Caco-2 (cell line): ENCODE measurements at regions of chr19 and their contacts with region 1.

Region 1: DNA sequence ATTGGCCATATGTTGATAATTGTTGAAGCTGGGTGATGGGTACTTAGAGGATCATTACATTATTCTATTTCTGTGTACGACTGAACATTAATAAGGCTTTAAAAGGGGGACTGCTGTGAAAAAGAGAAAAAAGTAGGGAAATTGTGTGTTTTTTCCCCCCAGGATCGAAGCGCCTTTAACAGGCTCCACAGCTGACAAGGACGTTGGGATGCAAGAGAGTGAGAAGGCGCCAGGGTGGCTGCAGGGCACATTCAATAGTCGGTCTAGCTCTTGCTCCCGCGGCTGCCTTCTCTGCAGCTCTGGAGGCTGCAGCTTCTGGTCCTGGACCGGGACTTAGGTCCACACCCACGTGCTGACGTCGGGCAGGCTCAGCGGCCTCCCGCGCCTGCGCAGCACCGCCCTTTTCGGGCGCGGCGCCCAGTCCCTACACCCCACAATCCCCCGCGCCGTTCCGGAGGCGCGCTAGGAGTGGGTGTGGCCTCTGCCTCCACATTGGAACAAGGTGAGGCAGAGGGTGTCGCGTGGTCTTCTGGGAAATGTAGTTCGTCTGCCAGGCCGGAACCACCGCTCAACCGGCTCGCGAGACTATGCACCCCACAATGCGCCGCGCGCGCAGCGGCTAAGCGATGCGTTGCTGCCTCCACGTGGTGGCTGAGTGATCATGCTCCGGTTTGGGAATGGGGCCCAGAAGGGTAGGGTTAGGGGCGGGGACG is 4.9 kb upstream of the LRFN3 start:
- DNase-seq: peak; percentile 100
- H3K4me3 ChIP-seq: peak overlapping the region; percentile 29
- H3K4me3 Mint-ChIP-seq: peak overlapping the region; percentile 67
- H3K27ac Mint-ChIP-seq: peak overlapping the region; percentile 3
- H3K4me1 ChIP-seq: peaks cover 8% of the 10 kb centered on the region; the same call in 1 of the 2 replicates
- H3K4me1 Mint-ChIP-seq: peaks cover 14% of the 10 kb centered on the region
- H3K27me3 ChIP-seq: no peaks in the 10 kb centered on the region
- H3K27me3 Mint-ChIP-seq: peaks cover 5% of the 10 kb centered on the region
- CTCF ChIP-seq: peak; percentile 82 to 93

Region 2: GRCh38 chr19:35693830-35694599 is 237.3 kb before region 1 on chr19:
- CTCF ChIA-PET with region 1: no interaction called
- POLR2A ChIA-PET with region 1: no interaction called
- intact Hi-C with region 1: loop called (anchors 1 kb)
- DNase-seq: peak; percentile 90 to 93
- H3K4me3 ChIP-seq: no peak overlapping the region
- H3K4me3 Mint-ChIP-seq: no peak overlapping the region
- H3K27ac Mint-ChIP-seq: no peak overlapping the region
- H3K4me1 ChIP-seq: no peaks in the 10 kb centered on the region
- H3K4me1 Mint-ChIP-seq: peaks cover 6% of the 10 kb centered on the region
- H3K27me3 ChIP-seq: no peaks in the 10 kb centered on the region
- H3K27me3 Mint-ChIP-seq: no peaks in the 10 kb centered on the region
- CTCF ChIP-seq: peak; percentile 98 to 99

Region 3: DNA sequence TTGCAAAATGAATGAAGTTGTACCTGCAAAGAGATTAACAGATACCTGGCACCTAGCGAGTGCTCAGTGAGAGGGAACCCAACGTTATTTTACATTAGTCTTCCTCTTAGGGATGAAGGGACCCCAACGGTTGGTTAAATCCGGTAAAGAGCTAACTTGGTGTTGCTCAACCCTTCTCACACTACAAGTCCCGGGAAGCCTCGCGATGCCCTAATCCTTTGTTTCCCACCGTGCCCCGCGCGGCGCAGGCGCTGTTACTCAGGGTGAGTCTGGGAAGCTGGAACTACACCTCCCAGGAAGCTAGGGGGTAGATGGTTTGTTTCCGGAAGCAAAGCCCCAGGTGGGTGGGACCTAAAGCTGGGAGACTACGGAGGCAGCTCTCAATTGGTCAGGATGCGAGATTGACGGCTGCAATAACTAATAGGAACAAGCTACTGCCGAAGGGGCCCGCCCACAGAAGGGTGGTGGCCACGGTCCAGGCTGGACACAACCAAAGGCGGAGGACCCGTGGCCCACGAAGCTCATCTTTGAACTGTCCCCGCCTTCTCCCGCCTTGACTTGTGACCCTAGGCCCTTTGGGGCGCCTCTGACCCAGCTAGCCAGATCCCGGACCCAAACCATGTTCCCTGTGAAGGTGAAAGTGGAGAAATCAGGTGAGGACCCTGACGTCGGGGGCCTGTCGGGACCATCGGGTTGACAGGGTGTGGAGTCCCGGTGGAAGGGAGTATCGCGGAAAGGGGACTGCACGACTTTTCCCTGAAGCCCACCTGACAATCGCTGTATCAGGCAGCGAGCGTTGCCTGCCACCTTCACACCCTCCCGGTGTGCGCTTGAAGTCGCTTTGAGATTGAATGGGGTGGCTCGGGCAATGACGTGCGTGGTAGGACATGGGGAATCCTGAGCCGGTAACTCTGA is 183.0 kb before region 1 on chr19 and contains the start of gene LIN37:
- CTCF ChIA-PET with region 1: interaction called, 13 read pairs
- POLR2A ChIA-PET with region 1: interaction called, 4 read pairs
- intact Hi-C with region 1: loop called (anchors 1 kb)
- DNase-seq: peak; percentile 99
- H3K4me3 ChIP-seq: peak within 1 kb of the TSS; percentile 58
- H3K4me3 Mint-ChIP-seq: peak within 1 kb of the TSS; percentile 89
- H3K27ac Mint-ChIP-seq: peak within 1 kb of the TSS; percentile 71
- H3K4me1 ChIP-seq: peaks cover 7% of the 10 kb centered on the region
- H3K4me1 Mint-ChIP-seq: peaks cover 18% of the 10 kb centered on the region
- H3K27me3 ChIP-seq: no peaks in the 10 kb centered on the region
- H3K27me3 Mint-ChIP-seq: no peaks in the 10 kb centered on the region
- CTCF ChIP-seq: no peak
- total RNA-seq, gene LIN37: 8.1 and 10.2 TPM in 2 replicates

Region 4: GRCh38 chr19:35879770-35880317 is 51.5 kb before region 1 on chr19:
- CTCF ChIA-PET with region 1: interaction called, 14 read pairs
- POLR2A ChIA-PET with region 1: no interaction called
- intact Hi-C with region 1: loop called (anchors 1 kb)
- DNase-seq: peak; percentile 91 to 95
- H3K4me3 ChIP-seq: no peak overlapping the region
- H3K4me3 Mint-ChIP-seq: no peak overlapping the region
- H3K27ac Mint-ChIP-seq: no peak overlapping the region
- H3K4me1 ChIP-seq: no peaks in the 10 kb centered on the region
- H3K4me1 Mint-ChIP-seq: peaks cover 10% of the 10 kb centered on the region
- H3K27me3 ChIP-seq: peaks cover 1% of the 10 kb centered on the region; the same call in 1 of the 2 replicates
- H3K27me3 Mint-ChIP-seq: peaks cover 21% of the 10 kb centered on the region
- CTCF ChIP-seq: no peak

Region 5: GRCh38 chr19:35899547-35900214 is 31.6 kb before region 1 on chr19:
- CTCF ChIA-PET with region 1: interaction called, 5 read pairs
- POLR2A ChIA-PET with region 1: interaction called, 3 read pairs
- intact Hi-C with region 1: loop called (anchors 1 kb)
- DNase-seq: peak; percentile 78 to 81
- H3K4me3 ChIP-seq: peak overlapping the region; percentile 87
- H3K4me3 Mint-ChIP-seq: peak overlapping the region; percentile 83
- H3K27ac Mint-ChIP-seq: peak overlapping the region; percentile 85
- H3K4me1 ChIP-seq: 0 out of 2 replicates have a peak, but pooled peaks cover 7% of the 10 kb centered on the region
- H3K4me1 Mint-ChIP-seq: peaks cover 7% of the 10 kb centered on the region
- H3K27me3 ChIP-seq: no peaks in the 10 kb centered on the region
- H3K27me3 Mint-ChIP-seq: peaks cover 5% of the 10 kb centered on the region
- CTCF ChIP-seq: no peak

Region 6: DNA sequence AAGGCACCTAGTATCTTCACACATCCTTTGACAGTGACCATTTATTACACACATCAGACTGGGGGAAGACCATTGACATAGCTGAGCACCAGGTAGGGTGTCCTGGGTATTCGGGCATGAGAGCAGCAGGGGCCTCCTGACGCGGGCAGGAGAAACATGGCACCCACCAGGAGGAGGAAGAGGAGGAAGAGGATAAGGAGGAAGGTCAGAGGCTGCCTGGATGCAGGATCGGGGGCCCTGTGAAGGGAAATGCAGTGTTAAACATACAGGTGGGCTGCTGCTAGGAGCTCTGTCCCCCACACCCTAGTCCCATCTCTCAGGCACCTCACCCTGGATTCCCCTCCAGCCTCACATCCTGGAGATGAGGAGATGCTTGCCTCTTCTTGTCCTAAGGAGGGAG is 72.0 kb after region 1 on chr19:
- CTCF ChIA-PET with region 1: no interaction called
- POLR2A ChIA-PET with region 1: no interaction called
- intact Hi-C with region 1: no loop called
- DNase-seq: no peak
- H3K4me3 ChIP-seq: no peak overlapping the region
- H3K4me3 Mint-ChIP-seq: no peak overlapping the region
- H3K27ac Mint-ChIP-seq: no peak overlapping the region
- H3K4me1 ChIP-seq: no peaks in the 10 kb centered on the region; the same call in 1 of the 2 replicates
- H3K4me1 Mint-ChIP-seq: peaks cover 6% of the 10 kb centered on the region
- H3K27me3 ChIP-seq: no peaks in the 10 kb centered on the region
- H3K27me3 Mint-ChIP-seq: no peaks in the 10 kb centered on the region
- CTCF ChIP-seq: no peak

Region 7: GRCh38 chr19:36114763-36115452 is 183.6 kb after region 1 on chr19 and contains the start of gene POLR2I:
- CTCF ChIA-PET with region 1: no interaction called
- POLR2A ChIA-PET with region 1: no interaction called
- intact Hi-C with region 1: loop called (anchors 1 kb)
- DNase-seq: peak; percentile 100
- H3K4me3 ChIP-seq: peak within 1 kb of the TSS; percentile 92
- H3K4me3 Mint-ChIP-seq: peak within 1 kb of the TSS; percentile 92
- H3K27ac Mint-ChIP-seq: peak within 1 kb of the TSS; percentile 96
- H3K4me1 ChIP-seq: peaks cover 9% of the 10 kb centered on the region; the same call in 1 of the 2 replicates
- H3K4me1 Mint-ChIP-seq: peaks cover 32% of the 10 kb centered on the region
- H3K27me3 ChIP-seq: no peaks in the 10 kb centered on the region
- H3K27me3 Mint-ChIP-seq: no peaks in the 10 kb centered on the region
- CTCF ChIP-seq: no peak
- total RNA-seq, gene POLR2I: 121 and 129 TPM in 2 replicates